GM12878 (cell line): ENCODE measurements at regions of chr12 and their contacts with region 1.

Region 1: GRCh38 chr12:6867413-6868210 is at the start of gene TPI1:
- DNase-seq: peak; percentile 23
- ATAC-seq: peak; percentile 86
- H3K4me3 ChIP-seq: peak within 1 kb of the TSS; percentile 100
- H3K27ac ChIP-seq: peak within 1 kb of the TSS; percentile 96
- H3K4me1 ChIP-seq: peaks cover 32% of the 10 kb centered on the region
- H3K27me3 ChIP-seq: no peaks in the 10 kb centered on the region
- CTCF ChIP-seq: no peak
- EP300 ChIP-seq: no peak
- POLR2A ChIP-seq: peak; percentile 88
- RAD21 ChIP-seq: no peak
- polyA plus RNA-seq, gene TPI1: 5,044 to 7,349 TPM

Region 2: DNA sequence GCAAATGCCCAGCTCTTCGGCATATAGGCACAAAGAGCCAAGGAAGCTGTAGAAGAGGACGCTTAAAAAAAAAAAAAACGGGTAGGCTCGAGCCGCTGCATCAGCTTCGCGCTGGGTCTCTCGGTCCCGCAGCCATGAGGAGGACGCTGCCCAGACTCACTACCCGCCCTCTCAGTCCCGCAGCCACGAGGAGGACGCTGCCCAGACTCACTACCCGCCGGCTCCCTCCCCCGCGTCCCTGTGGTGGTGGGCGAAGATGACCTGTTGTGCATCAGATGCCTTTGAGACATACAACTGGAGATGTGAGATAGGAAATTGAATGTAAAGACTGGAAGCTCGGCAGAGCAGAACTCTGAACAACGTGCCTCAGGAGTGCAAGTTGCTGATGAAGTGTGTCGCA is 16.9 kb after region 1 on chr12:
- CTCF ChIA-PET with region 1: interaction called, 121 read pairs
- POLR2A ChIA-PET with region 1: interaction called, 5 read pairs
- RAD21 ChIA-PET with region 1: interaction called, 4 read pairs
- SMC1A ChIA-PET with region 1: interaction called, 3 read pairs
- in situ Hi-C with region 1: no loop called
- intact Hi-C with region 1: no loop called
- DNase-seq: no peak
- ATAC-seq: no peak
- H3K4me3 ChIP-seq: no peak overlapping the region
- H3K27ac ChIP-seq: no peak overlapping the region
- H3K4me1 ChIP-seq: no peaks in the 10 kb centered on the region
- H3K27me3 ChIP-seq: no peaks in the 10 kb centered on the region
- CTCF ChIP-seq: no peak
- EP300 ChIP-seq: no peak
- POLR2A ChIP-seq: no peak
- RAD21 ChIP-seq: no peak

Region 3: DNA sequence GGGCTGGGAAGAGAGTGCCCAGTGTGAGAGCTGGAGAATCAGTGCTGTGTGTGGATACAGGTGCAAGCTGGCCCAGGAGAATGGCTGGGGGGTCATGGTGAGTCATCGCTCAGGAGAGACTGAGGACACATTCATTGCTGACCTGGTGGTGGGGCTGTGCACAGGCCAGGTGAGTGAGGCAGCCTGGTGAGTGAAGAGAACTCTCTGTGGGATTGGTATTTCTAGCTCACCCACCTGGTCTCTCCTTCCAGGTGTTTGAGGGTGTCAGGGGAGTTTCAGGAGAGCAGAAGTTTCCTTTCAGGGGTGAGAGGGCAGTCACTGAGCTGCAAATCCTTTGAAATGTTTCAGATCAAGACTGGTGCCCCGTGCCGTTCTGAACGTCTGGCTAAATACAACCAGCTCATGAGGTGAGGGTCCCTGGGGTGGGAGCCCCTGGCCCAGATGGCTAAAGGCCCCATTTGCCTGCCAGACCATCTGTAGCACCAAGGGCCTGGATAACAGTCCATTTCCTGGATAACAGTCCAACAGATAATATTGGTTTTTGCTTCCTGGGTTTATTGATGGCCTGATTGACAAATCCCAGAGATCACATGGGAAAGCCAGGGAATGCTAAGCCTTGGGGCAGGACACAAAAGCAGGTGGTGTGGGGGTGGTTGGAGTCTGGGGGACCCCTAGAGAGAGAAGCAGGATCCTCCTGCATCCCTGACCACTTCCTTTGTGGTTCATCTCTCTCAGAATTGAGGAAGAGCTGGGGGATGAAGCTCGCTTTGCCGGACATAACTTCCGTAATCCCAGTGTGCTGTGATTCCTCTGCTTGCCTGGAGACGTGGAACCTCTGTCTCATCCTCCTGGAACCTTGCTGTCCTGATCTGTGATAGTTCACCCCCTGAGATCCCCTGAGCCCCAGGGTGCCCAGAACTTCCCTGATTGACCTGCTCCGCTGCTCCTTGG is 54.7 kb after region 1 on chr12:
- CTCF ChIA-PET with region 1: interaction called, 22 read pairs
- POLR2A ChIA-PET with region 1: interaction called, 4 read pairs
- RAD21 ChIA-PET with region 1: interaction called, 4 read pairs
- SMC1A ChIA-PET with region 1: interaction called, 6 read pairs
- in situ Hi-C with region 1: no loop called
- intact Hi-C with region 1: loop called (anchors 2 kb)
- DNase-seq: no peak
- ATAC-seq: peak; percentile 32
- H3K4me3 ChIP-seq: peak overlapping the region; percentile 4; the same call in 1 of the 2 replicates
- H3K27ac ChIP-seq: peak overlapping the region; percentile 36
- H3K4me1 ChIP-seq: peaks cover 48% of the 10 kb centered on the region
- H3K27me3 ChIP-seq: no peaks in the 10 kb centered on the region
- CTCF ChIP-seq: 0 out of 6 replicates have a peak, but pooled peaks of 1 of the 3 experiments have one; percentile 13
- EP300 ChIP-seq: no peak
- POLR2A ChIP-seq: no peak
- RAD21 ChIP-seq: no peak

Region 4: GRCh38 chr12:6937481-6938297 is 70.1 kb after region 1 on chr12:
- CTCF ChIA-PET with region 1: interaction called, 26 read pairs
- POLR2A ChIA-PET with region 1: interaction called, 7 read pairs
- RAD21 ChIA-PET with region 1: interaction called, 20 read pairs
- SMC1A ChIA-PET with region 1: interaction called, 4 read pairs
- in situ Hi-C with region 1: no loop called
- intact Hi-C with region 1: no loop called
- DNase-seq: peak; percentile 90
- ATAC-seq: peak; percentile 96
- H3K4me3 ChIP-seq: peak overlapping the region; percentile 86
- H3K27ac ChIP-seq: peak overlapping the region; percentile 92
- H3K4me1 ChIP-seq: peaks cover 11% of the 10 kb centered on the region; the same call in 1 of the 2 replicates
- H3K27me3 ChIP-seq: no peaks in the 10 kb centered on the region
- CTCF ChIP-seq: peak; percentile 96 to 99 (median 97)
- EP300 ChIP-seq: no peak
- POLR2A ChIP-seq: peak; percentile 87
- RAD21 ChIP-seq: peak; percentile 35

Region 5: DNA sequence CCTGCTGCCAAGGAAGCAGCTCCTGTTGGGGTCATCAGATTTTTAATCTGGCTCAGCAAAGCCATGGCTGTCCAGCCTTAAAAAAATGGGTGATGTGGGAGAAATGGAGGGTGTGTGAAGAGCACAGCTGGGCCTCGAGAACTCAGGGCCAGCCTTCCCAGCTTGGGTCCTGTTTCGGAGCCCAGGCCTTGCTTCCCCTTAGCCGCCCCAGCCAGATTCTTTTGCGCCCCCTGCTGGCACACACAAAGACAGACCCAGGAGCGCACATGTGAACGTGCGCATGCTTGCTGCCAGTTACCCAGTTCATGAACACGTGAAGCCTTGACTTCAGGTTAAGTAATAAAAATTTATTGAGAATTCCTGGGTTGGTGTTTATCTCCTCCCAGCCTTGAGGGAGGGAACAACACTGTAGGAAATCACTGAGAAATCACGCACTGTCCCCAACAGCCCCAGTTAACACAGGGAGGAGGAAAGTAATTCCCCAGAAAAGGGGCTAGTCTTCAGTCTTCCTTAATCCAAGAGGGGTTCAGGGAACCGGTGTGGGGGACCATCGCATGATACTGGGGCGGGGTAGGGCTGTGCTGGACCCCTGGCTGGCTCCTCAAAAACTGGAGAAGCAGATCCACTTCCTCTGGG is 97.5 kb after region 1 on chr12:
- CTCF ChIA-PET with region 1: interaction called, 12 read pairs
- POLR2A ChIA-PET with region 1: no interaction called
- RAD21 ChIA-PET with region 1: interaction called, 4 read pairs
- SMC1A ChIA-PET with region 1: interaction called, 3 read pairs
- in situ Hi-C with region 1: no loop called
- intact Hi-C with region 1: loop called (anchors 1 kb)
- DNase-seq: no peak
- ATAC-seq: peak; percentile 66
- H3K4me3 ChIP-seq: no peak overlapping the region
- H3K27ac ChIP-seq: peak overlapping the region; percentile 64
- H3K4me1 ChIP-seq: peaks cover 38% of the 10 kb centered on the region
- H3K27me3 ChIP-seq: no peaks in the 10 kb centered on the region
- CTCF ChIP-seq: peak; percentile 86 to 99 (median 96)
- EP300 ChIP-seq: 0 out of 4 replicates have a peak, but pooled peaks of 1 of the 2 experiments have one; percentile 11
- POLR2A ChIP-seq: peak; percentile 44; the same call in 1 of the 2 replicates
- RAD21 ChIP-seq: peak; percentile 88